Calu3 (cell line): ENCODE measurements at regions of chr1 and their contacts with region 1.

Region 1: DNA sequence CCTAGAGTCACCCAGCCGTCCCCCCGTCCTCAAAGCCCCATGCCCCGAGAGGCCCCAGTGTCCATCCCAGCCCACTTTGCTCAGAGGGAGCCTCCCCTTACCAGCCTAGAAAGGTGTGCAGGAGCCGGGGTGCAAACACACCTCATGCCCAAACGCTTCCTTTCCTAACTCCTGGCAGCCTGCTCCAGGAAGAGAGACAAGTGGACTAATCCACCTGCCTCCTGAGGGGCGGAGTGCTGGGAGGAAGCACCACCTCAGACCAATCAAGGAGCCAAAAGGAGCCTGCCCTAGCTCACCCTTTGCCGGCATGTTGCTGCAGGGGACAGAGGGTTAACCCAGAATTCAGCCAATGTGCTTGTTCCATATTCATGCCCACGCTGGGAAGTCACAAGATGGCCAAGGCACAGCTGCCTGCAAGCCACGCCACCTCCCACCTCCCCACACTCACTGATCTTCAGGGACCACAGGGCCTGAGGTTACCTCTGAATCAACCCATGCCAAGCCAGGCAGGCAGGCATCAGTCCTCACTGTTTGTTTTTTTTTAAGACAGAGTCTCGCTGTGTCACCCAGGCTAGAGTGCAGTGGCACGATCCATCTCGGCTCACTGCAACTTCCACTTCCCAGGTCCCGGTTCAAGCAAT is 27.8 kb downstream of the PLEKHA6 start:
- DNase-seq: peak; percentile 56
- H3K4me3 Mint-ChIP-seq: peak overlapping the region; percentile 69
- H3K27ac Mint-ChIP-seq: peak overlapping the region; percentile 72
- H3K4me1 Mint-ChIP-seq: peaks cover 29% of the 10 kb centered on the region
- H3K27me3 Mint-ChIP-seq: no peaks in the 10 kb centered on the region
- CTCF ChIP-seq: no peak

Region 2: GRCh38 chr1:204177133-204177532 is 154.8 kb before region 1 on chr1:
- CTCF ChIA-PET with region 1: no interaction called
- intact Hi-C with region 1: no loop called
- DNase-seq: no peak
- H3K4me3 Mint-ChIP-seq: no peak overlapping the region
- H3K27ac Mint-ChIP-seq: no peak overlapping the region
- H3K4me1 Mint-ChIP-seq: no peaks in the 10 kb centered on the region
- H3K27me3 Mint-ChIP-seq: no peaks in the 10 kb centered on the region
- CTCF ChIP-seq: no peak

Region 3: GRCh38 chr1:204286831-204287421 is 45.0 kb before region 1 on chr1:
- CTCF ChIA-PET with region 1: interaction called, 4 read pairs
- intact Hi-C with region 1: loop called (anchors 5 kb)
- DNase-seq: peak; percentile 52
- H3K4me3 Mint-ChIP-seq: peak overlapping the region; percentile 74
- H3K27ac Mint-ChIP-seq: peak overlapping the region; percentile 93
- H3K4me1 Mint-ChIP-seq: peaks cover 51% of the 10 kb centered on the region
- H3K27me3 Mint-ChIP-seq: no peaks in the 10 kb centered on the region
- CTCF ChIP-seq: no peak